BJ (cell line): ENCODE measurements at regions of chr16 and their contacts with region 1.

Region 1: DNA sequence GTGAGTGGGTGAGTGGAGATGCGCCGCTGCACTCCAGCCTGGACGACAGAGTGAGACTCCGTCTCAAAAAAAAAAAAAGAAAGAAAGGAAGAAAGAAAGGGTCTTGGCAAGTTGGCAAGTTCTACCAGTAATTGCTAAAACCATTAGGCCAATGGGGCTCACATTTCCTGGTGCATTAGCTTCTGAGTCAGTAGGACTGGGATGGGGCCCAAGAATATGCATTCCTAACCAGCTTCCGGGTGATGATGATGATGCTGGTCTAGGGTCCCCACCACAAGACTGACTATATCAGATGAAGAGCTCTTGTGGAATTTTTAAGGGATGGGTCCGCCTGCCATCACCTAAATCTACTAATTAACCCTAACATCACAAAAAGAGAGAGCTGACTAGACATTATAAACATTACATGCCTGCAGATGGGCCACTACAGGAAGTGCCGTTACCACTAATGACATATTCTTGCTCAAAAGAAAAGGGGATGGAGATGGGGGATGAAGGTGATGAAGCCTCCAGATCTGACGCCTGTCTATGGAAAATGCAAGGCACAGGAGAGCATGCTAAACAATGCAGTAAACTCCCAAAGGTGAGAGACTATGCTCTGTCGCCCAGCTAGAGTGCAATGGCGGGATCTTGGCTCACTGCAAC is 13.1 kb downstream of the MYH11 start:
- DNase-seq: no peak
- H3K4me3 ChIP-seq: no peak overlapping the region
- H3K27me3 ChIP-seq: peaks cover 8% of the 10 kb centered on the region
- CTCF ChIP-seq: no peak

Region 2: DNA sequence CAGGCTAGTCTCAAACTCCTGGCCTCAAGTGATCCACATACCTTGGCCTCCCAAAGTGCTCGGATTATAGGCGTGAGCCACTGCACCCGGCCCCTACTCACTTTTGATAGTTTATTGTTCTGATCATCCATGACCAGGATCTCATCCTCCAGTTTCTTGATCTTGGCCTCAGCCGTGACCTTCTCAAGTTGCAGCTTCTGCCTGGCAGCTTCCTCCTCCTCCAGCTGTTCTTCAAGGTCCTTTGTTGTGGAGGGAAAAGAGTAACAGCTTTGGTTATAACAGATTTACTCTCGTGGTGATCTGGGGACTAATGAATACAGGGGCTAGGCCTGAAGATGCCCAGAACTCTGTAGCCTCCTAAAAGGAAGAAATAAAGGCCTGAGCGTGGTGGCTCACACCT is 103.8 kb before region 1 on chr16:
- CTCF ChIA-PET with region 1: no interaction called
- POLR2A ChIA-PET with region 1: no interaction called
- DNase-seq: no peak
- H3K4me3 ChIP-seq: no peak overlapping the region
- H3K27me3 ChIP-seq: peaks cover 1% of the 10 kb centered on the region; the same call in 1 of the 2 replicates
- CTCF ChIP-seq: no peak

Region 3: DNA sequence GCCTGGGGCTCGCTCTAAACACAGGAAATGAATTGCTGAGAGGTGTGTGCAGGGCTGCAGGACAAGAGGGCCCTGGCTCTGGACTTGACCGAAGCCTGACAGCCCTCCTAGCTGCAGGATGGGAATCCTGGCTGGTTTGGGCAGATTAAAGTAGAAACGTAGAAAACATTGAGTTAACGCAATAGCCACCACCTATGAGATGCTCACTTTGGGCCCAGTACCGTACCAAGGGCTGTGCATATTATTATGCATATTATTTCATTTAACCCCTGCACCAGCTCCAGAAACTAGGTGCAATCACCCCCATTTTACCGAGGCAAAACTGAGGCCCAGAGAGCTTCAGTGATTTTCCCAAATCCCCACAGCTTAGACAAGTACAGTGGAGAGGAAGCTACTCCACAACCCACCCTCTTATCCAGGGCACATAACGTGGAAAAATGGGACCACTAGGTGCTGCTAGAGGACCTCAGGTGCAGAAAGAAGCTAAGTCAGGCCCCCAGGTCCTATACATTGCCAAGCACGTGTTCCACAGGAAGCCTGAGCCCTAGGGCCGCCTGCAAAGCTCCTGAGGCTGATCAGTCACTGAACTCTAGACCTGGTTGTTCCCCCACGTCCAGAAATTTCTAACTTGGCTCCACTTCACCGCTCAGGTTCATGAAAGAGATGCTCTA is 66.1 kb before region 1 on chr16:
- CTCF ChIA-PET with region 1: no interaction called
- POLR2A ChIA-PET with region 1: no interaction called
- DNase-seq: no peak
- H3K4me3 ChIP-seq: no peak overlapping the region
- H3K27me3 ChIP-seq: peaks cover 2% of the 10 kb centered on the region
- CTCF ChIP-seq: peak; percentile 59

Region 4: GRCh38 chr16:15854061-15854460 is 10.3 kb after region 1 on chr16:
- CTCF ChIA-PET with region 1: interaction called, 3 read pairs
- POLR2A ChIA-PET with region 1: interaction called, 34 read pairs
- DNase-seq: no peak
- H3K4me3 ChIP-seq: no peak overlapping the region
- H3K27me3 ChIP-seq: peaks cover 30% of the 10 kb centered on the region
- CTCF ChIP-seq: no peak